H1 (cell line): ENCODE measurements at regions of chr3 and their contacts with region 1.

Region 1: DNA sequence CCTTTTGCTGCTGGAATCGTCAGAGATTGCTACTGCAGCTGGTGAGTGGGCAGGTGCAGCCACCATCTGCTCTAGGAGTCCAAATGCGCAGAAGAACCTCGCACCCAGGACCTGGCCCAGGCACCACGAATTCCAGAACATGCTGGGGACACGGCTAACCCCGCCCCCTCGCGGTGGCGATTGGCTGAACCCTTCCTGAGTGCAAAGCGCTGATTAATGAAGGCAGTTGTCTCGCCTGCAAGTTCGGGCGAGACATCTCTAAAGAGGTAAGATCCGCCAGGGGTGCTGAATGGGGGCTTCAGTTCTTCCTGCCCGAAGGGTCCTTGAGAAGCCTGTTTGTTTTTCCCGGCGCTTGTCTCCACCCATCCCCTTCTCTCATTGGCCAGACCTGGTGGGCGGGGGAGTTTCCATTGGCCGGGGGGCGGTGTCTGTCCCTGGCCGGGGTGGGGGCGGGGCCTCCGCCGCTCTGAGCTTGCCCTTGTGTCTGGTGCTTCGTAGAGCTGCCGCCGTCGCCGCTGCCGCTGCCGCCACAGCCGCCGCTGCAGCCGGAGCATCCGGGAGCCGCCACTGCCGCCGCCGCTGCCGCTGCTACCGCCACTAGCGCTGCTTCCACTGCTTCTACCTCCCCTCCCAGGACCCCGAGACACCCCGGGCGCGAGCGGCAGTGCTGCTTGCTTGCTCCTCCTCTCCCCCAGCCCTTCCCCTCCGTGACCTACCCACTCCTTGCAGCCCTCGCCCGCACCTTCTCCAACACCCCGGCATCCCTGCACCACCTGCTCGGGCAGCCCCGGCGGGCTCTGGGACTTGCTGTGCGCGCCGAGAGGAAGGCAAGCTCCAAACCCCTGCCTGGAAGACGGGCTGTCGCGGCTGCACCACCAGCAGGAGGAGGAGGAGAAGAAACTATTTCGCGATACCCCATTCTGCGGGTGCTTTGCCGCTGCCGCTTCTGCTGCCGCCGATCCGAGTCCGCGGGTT is at the start of gene CADM2:
- DNase-seq: peak; percentile 91 to 92
- H3K4me3 ChIP-seq: peak within 1 kb of the TSS; percentile 79 to 90 (median 85)
- H3K27ac ChIP-seq: peak within 1 kb of the TSS; percentile 78; the same call in 1 of the 2 replicates
- H3K4me1 ChIP-seq: peaks cover 0 to 7% (median 5%) of the 10 kb centered on the region in 4 experiments; a peak in 4 of 7 replicates
- H3K27me3 ChIP-seq: no peaks in the 10 kb centered on the region
- CTCF ChIP-seq: peak; percentile 21 to 37 (median 21); a peak in 3 of 4 replicates
- EP300 ChIP-seq: 0 out of 3 replicates have a peak, but pooled peaks of 1 of the 2 experiments have one; percentile 20
- POLR2A ChIP-seq: peak; percentile 68 to 88
- RAD21 ChIP-seq: peak; percentile 41 to 47
- total RNA-seq, gene CADM2: 20.2 and 20.9 TPM in 2 replicates

Region 2: DNA sequence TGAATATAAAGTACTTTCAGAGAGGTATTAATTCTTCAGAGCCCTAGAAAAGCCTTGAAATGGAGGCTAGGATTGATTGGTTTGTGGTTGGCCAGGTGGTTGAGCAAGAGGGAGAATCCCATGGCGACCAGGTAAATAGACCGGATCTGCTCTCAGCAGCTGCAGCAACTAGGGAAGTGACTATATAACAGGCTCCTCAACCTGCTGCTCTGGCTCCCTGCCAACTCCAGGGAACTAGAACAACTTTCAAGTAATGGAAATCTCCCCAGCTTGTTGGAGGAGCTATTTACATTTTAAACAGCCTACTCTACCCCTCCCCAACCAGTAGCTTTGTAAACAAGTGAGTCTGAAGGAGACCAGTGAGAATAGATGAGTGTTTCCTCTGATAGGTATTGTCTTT is 121.8 kb before region 1 on chr3:
- CTCF ChIA-PET with region 1: no interaction called
- POLR2A ChIA-PET with region 1: no interaction called
- DNase-seq: peak; percentile 63 to 88
- H3K4me3 ChIP-seq: no peak overlapping the region
- H3K27ac ChIP-seq: peak overlapping the region; percentile 88
- H3K4me1 ChIP-seq: peaks cover 0 to 10% (median 6%) of the 10 kb centered on the region in 4 experiments; a peak in 5 of 7 replicates
- H3K27me3 ChIP-seq: no peaks in the 10 kb centered on the region
- CTCF ChIP-seq: no peak
- EP300 ChIP-seq: peak; percentile 10 to 93; a peak in 2 of 3 replicates
- POLR2A ChIP-seq: no peak
- RAD21 ChIP-seq: peak; percentile 8 to 12; a peak in 2 of 4 replicates

Region 3: DNA sequence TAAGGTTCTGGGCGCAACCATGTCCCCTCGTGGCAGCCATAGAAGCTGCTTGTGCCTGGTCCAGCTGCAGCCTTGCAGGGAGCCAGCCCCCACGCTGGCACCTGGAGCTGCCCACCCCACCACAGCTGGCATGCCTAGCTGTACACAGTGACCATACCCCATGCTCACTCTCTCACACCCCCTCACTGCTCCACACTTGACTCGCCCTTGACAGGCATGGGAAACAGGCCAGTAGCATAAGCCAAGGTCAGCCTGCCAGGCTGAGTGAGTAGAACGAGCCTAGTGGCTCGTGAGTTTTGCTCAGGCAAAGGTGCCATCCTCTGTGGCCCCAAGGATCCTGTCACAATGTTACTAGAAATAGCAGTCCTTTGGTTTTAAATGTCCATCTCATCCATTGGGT is 52.7 kb before region 1 on chr3:
- CTCF ChIA-PET with region 1: no interaction called
- POLR2A ChIA-PET with region 1: no interaction called
- DNase-seq: no peak
- H3K4me3 ChIP-seq: no peak overlapping the region
- H3K27ac ChIP-seq: no peak overlapping the region
- H3K4me1 ChIP-seq: no peaks in the 10 kb centered on the region; a peak in 1 of 7 replicates
- H3K27me3 ChIP-seq: no peaks in the 10 kb centered on the region
- CTCF ChIP-seq: no peak
- EP300 ChIP-seq: no peak
- POLR2A ChIP-seq: no peak
- RAD21 ChIP-seq: no peak

Region 4: DNA sequence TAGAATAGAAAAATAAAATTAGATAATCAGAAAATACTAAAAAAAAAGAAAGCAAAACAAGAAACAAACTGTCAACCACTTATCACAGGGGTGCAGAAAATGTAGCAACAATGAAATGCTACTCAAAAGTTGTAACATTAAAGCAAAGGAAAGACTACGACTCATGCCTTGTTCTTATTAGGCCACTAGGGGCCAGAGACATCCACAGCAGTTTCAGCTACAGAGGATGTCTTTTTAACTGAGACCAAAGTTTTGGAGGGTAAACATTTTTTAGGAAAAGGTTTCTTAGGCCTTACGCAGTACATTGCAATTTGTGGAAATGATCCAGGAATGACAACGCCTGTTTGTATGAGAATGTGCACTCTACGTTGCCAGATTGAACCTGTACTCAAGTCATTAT is 15.4 kb before region 1 on chr3:
- CTCF ChIA-PET with region 1: interaction called, 13 read pairs
- POLR2A ChIA-PET with region 1: interaction called, 3 read pairs
- DNase-seq: no peak
- H3K4me3 ChIP-seq: no peak overlapping the region
- H3K27ac ChIP-seq: no peak overlapping the region
- H3K4me1 ChIP-seq: no peaks in the 10 kb centered on the region
- H3K27me3 ChIP-seq: no peaks in the 10 kb centered on the region
- CTCF ChIP-seq: peak in 1 of 3 experiments; percentile 80; a peak in 2 of 4 replicates
- EP300 ChIP-seq: no peak
- POLR2A ChIP-seq: no peak
- RAD21 ChIP-seq: peak; percentile 60 to 71